ENCODE measurements at regions of chr6 and their contacts with region 1.

Region 1: GRCh38 chr6:34392497-34393190 is at the start of gene NUDT3:
- DNase-seq: peak; percentile 96
- ATAC-seq: peak; percentile 87
- H3K4me3 Mint-ChIP-seq: no peak within 1 kb of the TSS
- H3K27ac Mint-ChIP-seq: peak within 1 kb of the TSS; percentile 95
- H3K4me1 Mint-ChIP-seq: peaks cover 26% of the 10 kb centered on the region
- H3K27me3 Mint-ChIP-seq: no peaks in the 10 kb centered on the region
- CTCF ChIP-seq: no peak
- total RNA-seq, gene NUDT3: 24.1 and 27.0 TPM in 2 replicates

Region 2: GRCh38 chr6:34196126-34196830 is 196.4 kb before region 1 on chr6:
- CTCF ChIA-PET with region 1: interaction called, 9 read pairs
- POLR2A ChIA-PET with region 1: interaction called, 3 read pairs
- intact Hi-C with region 1: loop called (anchors 1 kb)
- DNase-seq: peak; percentile 94
- ATAC-seq: peak; percentile 99
- H3K4me3 Mint-ChIP-seq: peak overlapping the region; percentile 91
- H3K27ac Mint-ChIP-seq: peak overlapping the region; percentile 83
- H3K4me1 Mint-ChIP-seq: peaks cover 8% of the 10 kb centered on the region
- H3K27me3 Mint-ChIP-seq: no peaks in the 10 kb centered on the region
- CTCF ChIP-seq: peak; percentile 78

Region 3: GRCh38 chr6:34295721-34296120 is 96.9 kb before region 1 on chr6:
- CTCF ChIA-PET with region 1: interaction called, 7 read pairs
- POLR2A ChIA-PET with region 1: interaction called, 3 read pairs
- intact Hi-C with region 1: loop called (anchors 1 kb)
- DNase-seq: no peak
- ATAC-seq: peak; percentile 90
- H3K4me3 Mint-ChIP-seq: peak overlapping the region; percentile 52
- H3K27ac Mint-ChIP-seq: peak overlapping the region; percentile 94
- H3K4me1 Mint-ChIP-seq: peaks cover 66% of the 10 kb centered on the region
- H3K27me3 Mint-ChIP-seq: no peaks in the 10 kb centered on the region
- CTCF ChIP-seq: no peak

Region 4: GRCh38 chr6:34332251-34333198 is 60.1 kb before region 1 on chr6:
- CTCF ChIA-PET with region 1: no interaction called
- POLR2A ChIA-PET with region 1: no interaction called
- intact Hi-C with region 1: loop called (anchors 5 kb)
- DNase-seq: no peak
- ATAC-seq: peak; percentile 64
- H3K4me3 Mint-ChIP-seq: peak overlapping the region; percentile 46
- H3K27ac Mint-ChIP-seq: peak overlapping the region; percentile 81
- H3K4me1 Mint-ChIP-seq: peaks cover 47% of the 10 kb centered on the region
- H3K27me3 Mint-ChIP-seq: no peaks in the 10 kb centered on the region
- CTCF ChIP-seq: no peak

Region 5: GRCh38 chr6:34374069-34374468 is 18.6 kb before region 1 on chr6:
- CTCF ChIA-PET with region 1: interaction called, 3 read pairs
- POLR2A ChIA-PET with region 1: no interaction called
- intact Hi-C with region 1: loop called (anchors 2 kb)
- DNase-seq: no peak
- ATAC-seq: peak; percentile 62
- H3K4me3 Mint-ChIP-seq: no peak overlapping the region
- H3K27ac Mint-ChIP-seq: no peak overlapping the region
- H3K4me1 Mint-ChIP-seq: peaks cover 23% of the 10 kb centered on the region
- H3K27me3 Mint-ChIP-seq: no peaks in the 10 kb centered on the region
- CTCF ChIP-seq: no peak

Region 6: DNA sequence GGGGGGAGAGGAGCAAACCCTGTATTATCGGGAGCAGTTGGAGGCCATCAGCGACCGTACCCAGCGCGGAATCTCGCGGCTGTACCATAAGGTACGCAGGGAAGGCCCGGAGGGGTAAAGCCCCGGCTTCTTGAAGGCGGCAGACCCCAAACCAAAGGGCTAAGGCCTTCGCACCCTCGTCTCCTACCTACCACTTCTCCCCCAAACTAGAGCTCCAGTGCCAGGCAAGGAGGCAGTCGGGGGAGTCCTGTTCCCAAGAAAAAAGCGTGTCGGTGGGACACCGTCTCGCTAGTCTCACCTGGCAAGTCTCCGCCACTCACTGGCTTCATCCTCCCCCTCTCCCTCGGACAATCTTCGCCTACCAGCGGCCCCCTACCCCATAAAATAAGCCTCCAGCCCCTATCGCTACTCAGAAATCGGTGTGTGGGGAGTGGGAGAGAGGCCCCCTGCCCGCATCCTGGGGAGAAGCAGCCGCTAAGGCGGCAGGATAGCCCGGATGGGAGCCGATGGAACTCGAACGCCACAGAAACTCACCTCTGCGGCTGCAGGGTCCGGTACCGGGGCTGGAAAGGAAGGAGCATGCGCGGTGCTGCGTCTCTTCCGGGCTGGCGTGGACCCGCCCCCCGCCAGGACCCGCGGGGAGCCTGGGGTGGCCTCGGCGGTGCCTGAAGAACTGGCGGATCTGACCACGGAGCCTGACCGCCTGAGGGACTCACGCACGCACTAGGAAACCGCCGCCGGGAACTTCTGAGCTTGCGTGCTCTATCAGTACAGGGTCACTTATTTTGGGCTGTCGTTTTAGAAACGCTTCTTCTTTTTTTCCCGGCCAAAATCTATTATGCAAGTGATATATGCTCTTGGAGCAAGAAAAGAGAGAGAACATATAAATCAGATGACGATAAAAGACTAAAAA is 33.1 kb after region 1 on chr6 and contains the start of gene RPS10:
- CTCF ChIA-PET with region 1: no interaction called
- POLR2A ChIA-PET with region 1: interaction called, 6 read pairs
- intact Hi-C with region 1: loop called (anchors 1 kb)
- DNase-seq: peak; percentile 97
- ATAC-seq: peak; percentile 99
- H3K4me3 Mint-ChIP-seq: peak within 1 kb of the TSS; percentile 97
- H3K27ac Mint-ChIP-seq: peak within 1 kb of the TSS; percentile 97
- H3K4me1 Mint-ChIP-seq: peaks cover 29% of the 10 kb centered on the region
- H3K27me3 Mint-ChIP-seq: no peaks in the 10 kb centered on the region
- CTCF ChIP-seq: no peak
- total RNA-seq, gene RPS10: 2,903 and 3,402 TPM in 2 replicates

Region 7: DNA sequence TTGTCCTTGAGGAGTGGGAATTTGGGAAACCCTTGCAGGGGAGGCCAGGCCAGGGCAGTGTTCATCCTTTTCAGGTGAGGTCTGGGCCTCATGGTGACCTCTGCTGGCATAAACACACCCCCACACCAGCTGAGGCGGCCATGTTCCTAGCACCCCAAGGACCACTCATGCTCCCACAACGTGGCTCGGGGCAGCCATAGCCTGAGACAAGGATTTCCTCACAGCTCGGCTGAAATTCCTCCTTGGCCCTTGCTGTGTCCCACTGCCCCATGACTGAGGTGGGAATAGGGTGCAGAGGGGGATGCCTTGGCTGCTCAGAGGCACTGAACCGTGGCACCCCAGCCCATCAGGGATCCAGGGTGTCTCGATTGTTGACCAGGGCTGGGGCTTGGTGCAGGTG is 190.8 kb after region 1 on chr6:
- CTCF ChIA-PET with region 1: no interaction called
- POLR2A ChIA-PET with region 1: no interaction called
- intact Hi-C with region 1: no loop called
- DNase-seq: no peak
- ATAC-seq: no peak
- H3K4me3 Mint-ChIP-seq: no peak overlapping the region
- H3K27ac Mint-ChIP-seq: no peak overlapping the region
- H3K4me1 Mint-ChIP-seq: peaks cover 5% of the 10 kb centered on the region
- H3K27me3 Mint-ChIP-seq: no peaks in the 10 kb centered on the region
- CTCF ChIP-seq: no peak

Region 8: DNA sequence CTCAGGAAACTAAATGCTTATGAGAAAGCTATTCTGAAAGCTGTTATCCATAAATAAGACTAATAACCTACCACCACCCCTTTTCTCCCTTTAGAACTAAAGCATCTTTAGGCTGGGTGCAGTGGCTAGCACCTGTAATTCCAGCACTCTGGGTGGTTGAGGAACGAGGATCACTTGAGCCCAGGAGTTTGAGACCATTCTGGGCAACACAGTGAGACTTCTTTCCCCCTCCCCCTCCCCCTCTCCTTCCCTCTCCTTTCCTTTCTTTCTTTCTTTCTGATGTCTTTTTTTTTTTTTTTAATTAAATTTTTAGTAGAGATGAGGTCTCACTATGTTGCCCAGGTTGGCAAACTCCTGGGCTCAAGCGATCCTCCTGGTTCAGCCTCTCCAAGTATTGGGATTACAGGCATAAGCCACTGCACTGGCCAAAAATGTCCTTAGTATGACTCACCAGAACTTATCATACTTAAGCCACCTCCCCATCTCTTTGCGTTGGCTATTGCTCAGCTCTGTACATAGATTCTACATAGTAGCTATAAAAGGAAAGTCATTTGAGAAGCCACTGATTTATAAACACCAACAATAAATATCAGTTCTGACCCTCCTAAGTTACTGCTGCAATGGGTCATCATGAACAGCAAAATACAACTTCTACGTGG is 218.3 kb after region 1 on chr6:
- CTCF ChIA-PET with region 1: interaction called, 3 read pairs
- POLR2A ChIA-PET with region 1: no interaction called
- intact Hi-C with region 1: loop called (anchors 2 kb)
- DNase-seq: no peak
- ATAC-seq: no peak
- H3K4me3 Mint-ChIP-seq: no peak overlapping the region
- H3K27ac Mint-ChIP-seq: no peak overlapping the region
- H3K4me1 Mint-ChIP-seq: peaks cover 9% of the 10 kb centered on the region
- H3K27me3 Mint-ChIP-seq: no peaks in the 10 kb centered on the region
- CTCF ChIP-seq: no peak